AG04450 (cell line): ENCODE measurements at regions of chr5 and their contacts with region 1.

Region 1: DNA sequence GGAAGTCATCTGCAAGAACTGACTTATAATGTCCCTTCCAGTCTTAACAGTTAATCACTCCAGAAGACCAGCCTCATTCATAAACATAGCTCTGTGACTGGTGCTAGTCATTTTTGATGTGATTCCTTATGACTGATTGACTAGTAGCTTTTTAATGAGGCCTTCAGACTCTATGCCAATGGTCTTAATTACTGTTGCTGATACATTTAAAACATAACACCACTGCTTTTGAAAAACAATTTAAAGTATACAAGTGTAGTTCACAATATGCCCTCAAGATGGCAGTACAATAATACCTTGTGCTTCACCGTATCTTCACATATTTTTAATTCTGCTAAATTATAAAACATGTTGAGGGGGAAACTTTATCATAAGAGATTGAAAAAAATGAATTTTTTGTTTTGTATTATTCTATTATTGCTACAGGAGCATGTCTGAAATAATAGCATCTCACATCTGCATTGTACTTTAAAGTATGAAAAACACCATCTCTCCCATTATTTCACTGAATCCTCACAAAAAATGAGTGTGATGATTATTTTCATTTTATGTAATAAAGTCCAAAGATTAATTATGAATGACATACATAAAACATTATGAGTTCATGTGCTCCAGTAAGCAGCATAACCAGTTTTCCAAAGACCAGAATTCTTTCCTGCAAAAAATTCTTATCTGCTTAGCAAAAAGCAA is 55.2 kb upstream of the SHISAL2B start:
- DNase-seq: peak; percentile 15
- H3K4me3 ChIP-seq: no peak overlapping the region
- H3K27ac ChIP-seq: no peak overlapping the region
- H3K27me3 ChIP-seq: no peaks in the 10 kb centered on the region
- CTCF ChIP-seq: peak; percentile 66

Region 2: GRCh38 chr5:63655043-63655442 is 980.1 kb before region 1 on chr5:
- CTCF ChIA-PET with region 1: no interaction called
- POLR2A ChIA-PET with region 1: no interaction called
- DNase-seq: no peak
- H3K4me3 ChIP-seq: no peak overlapping the region
- H3K27ac ChIP-seq: no peak overlapping the region
- H3K27me3 ChIP-seq: no peaks in the 10 kb centered on the region
- CTCF ChIP-seq: no peak

Region 3: GRCh38 chr5:64518809-64519208 is 116.3 kb before region 1 on chr5:
- CTCF ChIA-PET with region 1: no interaction called
- POLR2A ChIA-PET with region 1: no interaction called
- DNase-seq: no peak
- H3K4me3 ChIP-seq: no peak overlapping the region
- H3K27ac ChIP-seq: no peak overlapping the region
- H3K27me3 ChIP-seq: no peaks in the 10 kb centered on the region
- CTCF ChIP-seq: no peak

Region 4: DNA sequence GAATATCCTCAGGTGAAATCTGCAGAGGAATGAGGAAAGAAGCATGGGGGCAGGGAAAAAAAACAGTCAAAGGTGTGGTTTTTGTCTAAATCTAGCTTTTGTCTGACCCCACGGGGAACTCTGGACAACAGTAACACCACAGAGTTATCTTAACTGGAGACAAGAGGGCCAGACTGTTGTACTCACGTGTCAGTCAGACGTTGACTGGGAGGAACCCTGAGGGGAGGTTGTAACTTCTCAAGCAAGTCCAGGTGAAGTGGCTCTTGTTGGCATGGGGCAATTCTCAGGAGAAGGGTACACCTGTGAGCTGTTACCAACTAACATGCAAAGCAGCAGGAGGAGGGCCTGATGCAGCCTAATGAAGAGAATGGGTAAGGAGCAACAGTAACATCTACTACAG is 11.0 kb after region 1 on chr5:
- CTCF ChIA-PET with region 1: interaction called, 26 read pairs
- POLR2A ChIA-PET with region 1: no interaction called
- DNase-seq: no peak
- H3K4me3 ChIP-seq: no peak overlapping the region
- H3K27ac ChIP-seq: no peak overlapping the region
- H3K27me3 ChIP-seq: no peaks in the 10 kb centered on the region
- CTCF ChIP-seq: no peak

Region 5: GRCh38 chr5:64768358-64769312 is 133.5 kb after region 1 on chr5 and contains the starts of genes CWC27 and SREK1IP1:
- CTCF ChIA-PET with region 1: interaction called, 10 read pairs
- POLR2A ChIA-PET with region 1: no interaction called
- DNase-seq: peak; percentile 77
- H3K4me3 ChIP-seq: peak within 1 kb of the TSS; percentile 96
- H3K27ac ChIP-seq: peak within 1 kb of the TSS; percentile 89
- H3K27me3 ChIP-seq: no peaks in the 10 kb centered on the region
- CTCF ChIP-seq: peak; percentile 41
- polyA plus RNA-seq, gene CWC27: 23.2 and 39.5 TPM in 2 replicates
- polyA plus RNA-seq, gene SREK1IP1: 3.7 and 3.8 TPM in 2 replicates

Region 6: GRCh38 chr5:65108786-65109743 is 473.9 kb after region 1 on chr5:
- CTCF ChIA-PET with region 1: no interaction called
- POLR2A ChIA-PET with region 1: no interaction called
- DNase-seq: no peak
- H3K4me3 ChIP-seq: no peak overlapping the region
- H3K27ac ChIP-seq: no peak overlapping the region
- H3K27me3 ChIP-seq: no peaks in the 10 kb centered on the region
- CTCF ChIP-seq: no peak